Colonic mucosa (tissue), 4 donors: ENCODE measurements at regions of chr3 and their contacts with region 1.

Region 1: GRCh38 chr3:22887664-22888291 is 315.3 kb upstream of the UBE2E2 start:
- DNase-seq: peak; percentile 19
- H3K4me3 ChIP-seq: no peak overlapping the region
- H3K27ac ChIP-seq: no peak overlapping the region
- H3K4me1 ChIP-seq: no peaks in the 10 kb centered on the region
- H3K27me3 ChIP-seq: no peaks in the 10 kb centered on the region
- CTCF ChIP-seq: peak; percentile 51

Region 2: DNA sequence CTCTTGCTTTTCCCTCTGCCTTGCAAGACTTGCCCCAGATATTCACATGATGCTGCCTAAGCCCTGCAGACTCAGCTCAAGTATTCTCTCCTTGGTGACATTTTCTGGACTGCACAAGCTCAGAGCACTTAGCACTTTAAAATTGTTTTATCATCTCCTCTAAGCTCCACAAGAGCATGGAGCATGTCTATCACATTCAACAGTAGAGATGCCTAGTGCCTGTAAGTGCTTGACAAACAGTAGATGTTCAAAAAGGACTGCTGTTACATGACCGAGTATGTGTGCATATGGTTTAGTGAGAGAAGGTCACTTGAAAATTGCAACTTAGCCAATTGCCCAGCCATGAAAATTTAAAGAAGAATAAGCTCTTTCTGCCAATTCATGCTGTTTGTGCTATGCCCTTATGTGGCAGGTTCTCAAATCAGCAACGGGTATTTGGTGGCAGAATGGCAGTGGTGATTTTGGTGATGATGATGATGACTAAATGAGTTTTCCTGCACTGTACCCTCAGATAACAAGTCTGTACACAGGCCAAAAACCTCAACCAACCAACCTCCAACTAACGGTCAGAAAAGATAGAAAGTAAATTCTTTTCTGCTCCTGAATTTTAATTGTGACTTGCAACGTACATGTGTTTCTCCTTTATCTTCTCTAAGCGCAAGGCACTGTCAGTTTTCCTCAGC is 331.9 kb before region 1 on chr3:
- intact Hi-C with region 1: loop called (anchors 5 kb)
- DNase-seq: no peak
- H3K4me3 ChIP-seq: no peak overlapping the region
- H3K27ac ChIP-seq: no peak overlapping the region
- H3K4me1 ChIP-seq: no peaks in the 10 kb centered on the region
- H3K27me3 ChIP-seq: no peaks in the 10 kb centered on the region
- CTCF ChIP-seq: no peak

Region 3: DNA sequence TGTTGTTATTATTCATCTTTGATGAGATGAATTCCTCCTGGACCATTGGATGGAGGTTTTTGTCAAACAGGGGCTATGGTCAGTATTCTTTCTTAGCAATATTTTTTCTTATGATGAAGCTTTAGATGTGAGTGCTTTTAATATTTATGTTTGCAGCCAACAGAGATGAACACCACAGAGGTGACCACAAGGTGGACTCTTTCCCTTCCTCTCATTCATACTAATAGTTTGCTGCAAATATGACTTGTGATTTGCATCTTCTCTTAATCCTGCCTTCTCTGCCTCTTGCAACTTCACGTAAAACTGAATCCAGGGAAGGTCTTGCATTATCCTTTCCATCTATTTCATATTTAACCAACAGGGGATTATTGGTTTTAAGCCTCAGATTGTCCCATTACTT is 157.8 kb before region 1 on chr3:
- intact Hi-C with region 1: loop called (anchors 5 kb)
- DNase-seq: no peak
- H3K4me3 ChIP-seq: no peak overlapping the region
- H3K27ac ChIP-seq: no peak overlapping the region
- H3K4me1 ChIP-seq: no peaks in the 10 kb centered on the region
- H3K27me3 ChIP-seq: no peaks in the 10 kb centered on the region
- CTCF ChIP-seq: no peak